Left cardiac atrium (tissue), 4 donors: ENCODE measurements at regions of chr16 and their contacts with region 1.

Region 1: GRCh38 chr16:69381231-69381630 is 4.6 kb downstream of the TERF2 start:
- DNase-seq: no peak
- ATAC-seq: no peak

Region 2: GRCh38 chr16:69339289-69340108 is 41.7 kb before region 1 on chr16 and contains the starts of genes COG8 and NIP7:
- intact Hi-C with region 1: loop called in 1 of 2 experiments (anchors 5 kb)
- DNase-seq: peak; percentile 96
- ATAC-seq: peak; percentile 99
- total RNA-seq, gene COG8: 20.5 to 21.9 TPM
- total RNA-seq, gene NIP7: 9.1 to 20.8 TPM